ENCODE measurements at regions of chr1 and their contacts with region 1.

Region 1: DNA sequence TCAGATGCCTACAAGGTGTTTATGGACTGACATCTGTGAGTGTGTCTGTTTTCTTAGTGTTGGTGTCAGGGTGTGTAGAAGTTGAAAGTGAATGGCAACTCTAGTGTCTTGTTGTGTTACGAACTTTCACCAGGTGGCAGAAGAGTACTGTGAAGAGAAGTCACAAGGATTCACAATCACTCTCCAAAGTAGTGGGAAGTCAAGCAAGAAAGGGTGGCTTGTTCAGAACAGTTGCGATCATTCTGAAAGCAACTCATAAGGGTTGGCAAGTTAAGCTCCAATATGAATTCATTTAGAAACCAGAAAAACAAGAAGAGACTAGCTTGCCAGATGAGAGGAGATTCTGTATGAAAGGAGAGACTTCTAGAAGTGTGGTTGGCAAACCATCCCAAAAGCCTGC is 86.1 kb downstream of the FASLG start:
- DNase-seq: peak; percentile 52
- ATAC-seq: peak; percentile 87
- H3K4me3 ChIP-seq: no peak overlapping the region
- H3K27ac ChIP-seq: no peak overlapping the region
- H3K4me1 ChIP-seq: peaks cover 22% of the 10 kb centered on the region
- H3K27me3 ChIP-seq: no peaks in the 10 kb centered on the region; a peak in 1 of 5 replicates
- CTCF ChIP-seq: peak; percentile 86
- EP300 ChIP-seq: no peak
- POLR2A ChIP-seq: no peak
- RAD21 ChIP-seq: peak; percentile 71

Region 2: GRCh38 chr1:172826096-172826743 is 81.2 kb after region 1 on chr1:
- CTCF ChIA-PET with region 1: no interaction called
- POLR2A ChIA-PET with region 1: no interaction called
- in situ Hi-C with region 1: no loop called
- intact Hi-C with region 1: no loop called
- DNase-seq: peak; percentile 21
- ATAC-seq: peak; percentile 73
- H3K4me3 ChIP-seq: peak overlapping the region in 2 of 3 experiments; percentile 14 to 46; a peak in 2 of 6 replicates
- H3K27ac ChIP-seq: no peak overlapping the region
- H3K4me1 ChIP-seq: peaks cover 9% of the 10 kb centered on the region
- H3K27me3 ChIP-seq: no peaks in the 10 kb centered on the region
- CTCF ChIP-seq: peak; percentile 72
- EP300 ChIP-seq: no peak
- POLR2A ChIP-seq: no peak
- RAD21 ChIP-seq: peak; percentile 52; the same call in 1 of the 2 replicates

Region 3: DNA sequence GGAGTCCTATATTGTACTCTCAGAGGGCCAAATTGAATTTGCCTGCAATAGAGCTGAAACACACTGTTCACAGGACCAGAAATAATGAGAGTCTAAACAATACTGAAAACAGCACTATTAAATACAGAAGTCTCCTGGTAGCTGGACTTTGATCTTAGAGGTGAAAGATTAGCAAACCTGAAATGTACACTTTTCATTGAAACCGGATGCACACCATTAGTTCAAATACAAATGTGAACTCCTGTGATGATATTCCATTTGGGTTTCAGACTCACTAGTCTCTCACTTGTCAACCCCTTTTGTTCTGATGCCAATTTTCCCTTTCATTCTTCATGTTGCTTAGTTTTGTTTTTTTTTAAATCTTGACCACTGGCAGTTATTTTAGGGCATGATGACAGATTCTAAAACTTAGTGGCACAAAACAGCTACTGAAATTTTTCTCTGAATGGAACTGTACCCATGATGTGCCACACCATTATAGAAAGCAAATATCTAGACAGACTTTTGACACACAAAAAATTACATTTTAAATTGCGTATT is 468.0 kb after region 1 on chr1:
- CTCF ChIA-PET with region 1: no interaction called
- POLR2A ChIA-PET with region 1: interaction called, 3 read pairs
- in situ Hi-C with region 1: loop called (anchors 5 kb)
- intact Hi-C with region 1: no loop called
- DNase-seq: peak; percentile 91
- ATAC-seq: peak; percentile 15; the same call in 2 of the 3 replicates
- H3K4me3 ChIP-seq: peak overlapping the region in 1 of 3 experiments; percentile 0; a peak in 2 of 6 replicates
- H3K27ac ChIP-seq: peak overlapping the region; percentile 85
- H3K4me1 ChIP-seq: peaks cover 71% of the 10 kb centered on the region
- H3K27me3 ChIP-seq: no peaks in the 10 kb centered on the region
- CTCF ChIP-seq: no peak
- EP300 ChIP-seq: peak in 1 of 2 experiments; percentile 86; a peak in 2 of 4 replicates
- POLR2A ChIP-seq: no peak
- RAD21 ChIP-seq: no peak

Region 4: DNA sequence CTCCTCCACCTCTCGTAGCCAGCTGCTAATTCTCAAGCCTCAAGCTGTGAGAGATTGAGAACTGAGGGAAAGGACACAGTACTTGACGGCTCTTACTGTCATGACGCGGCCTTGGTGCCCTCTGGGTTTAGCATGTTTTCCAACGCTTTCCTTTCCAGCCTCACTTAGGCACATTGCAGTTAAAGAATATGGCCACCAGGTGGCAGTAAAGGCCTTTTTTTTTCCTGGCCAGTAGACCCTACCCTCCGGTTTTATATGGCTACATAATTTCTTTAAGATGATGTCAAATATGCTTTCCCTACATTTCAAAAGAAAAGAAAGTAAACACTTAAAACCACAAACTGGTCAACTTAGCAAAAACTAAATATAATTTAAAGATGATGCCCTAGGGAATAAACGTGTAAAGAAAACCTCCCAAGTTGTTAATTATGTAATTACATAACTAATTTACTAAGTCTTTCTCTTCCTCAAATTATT is 675.4 kb after region 1 on chr1:
- CTCF ChIA-PET with region 1: interaction called, 3 read pairs
- POLR2A ChIA-PET with region 1: no interaction called
- in situ Hi-C with region 1: loop called (anchors 10 kb)
- intact Hi-C with region 1: loop called (anchors 1 kb)
- DNase-seq: peak; percentile 64
- ATAC-seq: peak; percentile 90
- H3K4me3 ChIP-seq: no peak overlapping the region
- H3K27ac ChIP-seq: no peak overlapping the region
- H3K4me1 ChIP-seq: no peaks in the 10 kb centered on the region
- H3K27me3 ChIP-seq: no peaks in the 10 kb centered on the region
- CTCF ChIP-seq: peak; percentile 83
- EP300 ChIP-seq: no peak
- POLR2A ChIP-seq: no peak
- RAD21 ChIP-seq: peak; percentile 77

Region 5: GRCh38 chr1:173714759-173715537 is 969.9 kb after region 1 on chr1 and contains the start of gene KLHL20:
- CTCF ChIA-PET with region 1: no interaction called
- POLR2A ChIA-PET with region 1: no interaction called
- in situ Hi-C with region 1: no loop called
- intact Hi-C with region 1: loop called (anchors 10 kb)
- DNase-seq: peak; percentile 89
- ATAC-seq: peak; percentile 98
- H3K4me3 ChIP-seq: peak within 1 kb of the TSS; percentile 74 to 97 (median 84)
- H3K27ac ChIP-seq: peak within 1 kb of the TSS; percentile 74
- H3K4me1 ChIP-seq: peaks cover 31% of the 10 kb centered on the region
- H3K27me3 ChIP-seq: peaks cover 0 to 4% of the 10 kb centered on the region in 2 experiments; a peak in 2 of 5 replicates
- CTCF ChIP-seq: peak; percentile 41
- EP300 ChIP-seq: peak in 1 of 2 experiments; percentile 59; a peak in 2 of 4 replicates
- POLR2A ChIP-seq: peak; percentile 74 to 81
- RAD21 ChIP-seq: no peak; the same call in 1 of the 2 replicates
- total RNA-seq, gene KLHL20: 14.3 and 18.8 TPM in 2 replicates

Measured in HepG2 (cell line).